ENCODE measurements at regions of chr7 and their contacts with region 1.

Region 1: DNA sequence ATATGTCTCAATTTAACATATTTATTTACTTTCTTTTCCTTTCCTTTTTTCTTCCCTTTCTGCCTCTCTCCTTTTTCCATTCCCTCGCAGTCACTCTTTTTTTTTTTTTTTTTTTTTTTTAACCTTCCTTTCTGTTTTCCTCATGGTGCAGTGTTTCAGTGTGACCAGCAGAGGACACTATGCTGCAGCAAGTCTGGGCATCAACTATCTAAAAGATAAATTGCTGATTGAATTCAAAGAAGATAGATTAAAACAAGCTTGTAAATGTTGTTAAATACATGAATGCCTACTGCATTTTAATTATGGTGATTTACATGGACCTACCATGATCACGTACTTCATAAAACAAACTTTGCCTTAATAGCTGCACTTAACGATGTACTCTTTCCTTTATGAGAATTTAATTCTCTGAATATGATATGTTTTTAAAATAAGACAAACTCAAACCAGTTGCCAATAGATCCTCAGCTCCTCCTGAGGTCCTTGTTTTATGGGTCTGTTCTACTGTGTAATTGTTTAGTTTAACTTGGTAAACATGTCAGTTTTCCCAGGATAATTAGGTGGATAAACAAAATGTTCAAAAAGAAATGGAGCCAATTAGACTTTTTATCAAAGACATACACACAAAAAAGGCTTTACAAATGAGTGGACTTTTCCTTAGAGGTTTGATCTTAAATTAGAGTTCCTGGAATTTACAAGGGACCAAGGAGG is 101.0 kb upstream of the AGR3 start:
- DNase-seq: peak; percentile 64
- ATAC-seq: no peak
- H3K4me3 ChIP-seq: no peak overlapping the region
- H3K27ac ChIP-seq: peak overlapping the region; percentile 23
- H3K4me1 ChIP-seq: peaks cover 43% of the 10 kb centered on the region
- H3K27me3 ChIP-seq: no peaks in the 10 kb centered on the region
- CTCF ChIP-seq: peak; percentile 93

Region 2: GRCh38 chr7:16801111-16801542 is 181.7 kb before region 1 on chr7:
- CTCF ChIA-PET with region 1: no interaction called
- POLR2A ChIA-PET with region 1: no interaction called
- intact Hi-C with region 1: loop called (anchors 1 kb)
- DNase-seq: peak; percentile 94
- ATAC-seq: peak; percentile 50
- H3K4me3 ChIP-seq: no peak overlapping the region
- H3K27ac ChIP-seq: peak overlapping the region; percentile 35
- H3K4me1 ChIP-seq: peaks cover 55% of the 10 kb centered on the region
- H3K27me3 ChIP-seq: no peaks in the 10 kb centered on the region
- CTCF ChIP-seq: peak; percentile 78

Region 3: GRCh38 chr7:16881844-16882243 is 101.0 kb before region 1 on chr7 and contains the start of gene AGR3:
- CTCF ChIA-PET with region 1: no interaction called
- POLR2A ChIA-PET with region 1: no interaction called
- intact Hi-C with region 1: no loop called
- DNase-seq: no peak
- ATAC-seq: no peak
- H3K4me3 ChIP-seq: no peak within 1 kb of the TSS
- H3K27ac ChIP-seq: no peak within 1 kb of the TSS
- H3K4me1 ChIP-seq: no peaks in the 10 kb centered on the region
- H3K27me3 ChIP-seq: no peaks in the 10 kb centered on the region
- CTCF ChIP-seq: no peak
- total RNA-seq, gene AGR3: not detected in 2 replicates

Region 4: DNA sequence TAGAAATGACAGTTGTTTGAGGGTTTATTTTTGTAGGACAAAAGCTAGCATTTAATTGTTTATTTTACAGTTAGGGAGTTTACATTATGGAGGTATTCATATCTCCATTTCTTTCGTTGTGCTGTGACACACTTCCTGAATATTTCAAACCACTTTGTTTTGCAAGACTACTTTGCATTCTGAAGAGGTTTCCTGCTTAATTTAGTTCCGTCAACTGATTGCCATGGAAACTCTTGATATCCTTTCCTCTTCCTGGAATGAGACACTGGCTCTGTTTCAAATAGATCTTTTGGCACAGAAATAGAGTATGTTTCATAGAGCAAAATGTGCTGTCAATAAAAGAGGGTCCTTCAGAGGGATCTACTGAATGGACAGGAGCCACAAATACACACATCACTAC is 58.5 kb after region 1 on chr7:
- CTCF ChIA-PET with region 1: no interaction called
- POLR2A ChIA-PET with region 1: interaction called, 4 read pairs
- intact Hi-C with region 1: loop called (anchors 2 kb)
- DNase-seq: peak; percentile 87
- ATAC-seq: peak; percentile 71
- H3K4me3 ChIP-seq: peak overlapping the region; percentile 9; the same call in 1 of the 2 replicates
- H3K27ac ChIP-seq: peak overlapping the region; percentile 80
- H3K4me1 ChIP-seq: peaks cover 53% of the 10 kb centered on the region
- H3K27me3 ChIP-seq: no peaks in the 10 kb centered on the region
- CTCF ChIP-seq: no peak

Region 5: DNA sequence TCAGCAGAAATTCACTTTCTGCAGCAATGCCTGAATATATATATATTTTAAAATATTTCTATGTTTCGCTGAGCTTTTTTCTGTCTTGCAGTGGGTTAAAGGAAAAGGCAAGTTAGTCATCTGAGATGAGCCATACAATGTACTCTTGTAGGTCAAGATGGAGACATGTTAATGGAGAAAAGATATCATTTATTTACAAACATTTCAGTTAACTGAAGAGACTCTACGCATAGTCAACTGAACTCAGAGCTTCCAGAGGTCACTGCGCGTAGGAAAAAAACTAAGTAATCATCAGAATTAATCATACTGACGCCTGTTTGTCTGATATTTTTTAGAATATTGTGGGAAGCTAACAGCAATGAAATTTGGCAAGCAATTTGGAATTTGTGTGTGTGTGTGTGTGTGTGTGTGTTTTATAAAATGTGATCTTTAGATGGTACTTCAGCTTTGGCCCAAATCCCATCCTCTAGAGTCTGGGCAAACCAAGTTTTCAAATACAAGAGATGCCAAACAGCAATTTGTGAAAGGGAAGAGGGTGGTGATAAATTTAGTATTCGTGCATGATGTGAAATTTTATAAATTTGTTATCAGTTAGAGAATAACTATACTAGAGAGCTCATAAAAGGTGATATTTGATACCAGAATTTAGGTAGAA is 92.9 kb after region 1 on chr7:
- CTCF ChIA-PET with region 1: no interaction called
- POLR2A ChIA-PET with region 1: no interaction called
- intact Hi-C with region 1: no loop called
- DNase-seq: no peak
- ATAC-seq: no peak
- H3K4me3 ChIP-seq: no peak overlapping the region
- H3K27ac ChIP-seq: no peak overlapping the region
- H3K4me1 ChIP-seq: no peaks in the 10 kb centered on the region
- H3K27me3 ChIP-seq: no peaks in the 10 kb centered on the region
- CTCF ChIP-seq: no peak

Region 6: GRCh38 chr7:17139081-17139480 is 156.3 kb after region 1 on chr7:
- CTCF ChIA-PET with region 1: no interaction called
- POLR2A ChIA-PET with region 1: no interaction called
- intact Hi-C with region 1: loop called (anchors 2 kb)
- DNase-seq: peak; percentile 56
- ATAC-seq: peak; percentile 20
- H3K4me3 ChIP-seq: peak overlapping the region; percentile 7; the same call in 1 of the 2 replicates
- H3K27ac ChIP-seq: peak overlapping the region; percentile 95
- H3K4me1 ChIP-seq: peaks cover 56% of the 10 kb centered on the region
- H3K27me3 ChIP-seq: no peaks in the 10 kb centered on the region
- CTCF ChIP-seq: no peak

Region 7: DNA sequence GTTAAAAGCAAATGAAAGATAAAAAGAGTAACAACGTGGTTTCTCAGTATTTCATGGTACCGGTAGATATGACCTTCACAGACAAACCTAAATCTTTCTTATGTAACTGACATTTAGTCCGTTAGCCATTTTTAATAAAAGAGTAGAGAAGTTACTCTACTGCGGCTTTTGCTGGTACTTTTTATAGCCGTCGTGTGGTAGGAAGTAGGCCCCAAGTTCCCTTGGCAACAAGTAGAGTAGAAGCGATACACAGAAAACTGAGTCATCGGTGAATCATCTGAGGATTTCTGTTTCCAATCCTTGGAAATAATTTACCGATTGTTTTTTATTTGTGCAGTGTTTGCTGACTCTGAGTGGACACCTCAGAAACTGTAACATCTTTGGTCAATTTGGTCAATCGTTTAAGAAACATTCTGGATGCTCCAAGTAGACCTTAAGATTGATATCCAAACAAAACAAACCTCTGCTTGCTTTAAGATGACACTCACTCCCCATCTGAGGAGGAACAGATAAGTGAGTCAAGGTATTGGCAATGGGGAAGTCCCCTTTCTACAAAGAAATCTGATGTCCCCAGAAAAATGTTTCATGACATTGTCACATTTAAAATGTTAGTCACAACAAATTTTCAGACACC is 251.7 kb after region 1 on chr7:
- CTCF ChIA-PET with region 1: no interaction called
- POLR2A ChIA-PET with region 1: no interaction called
- intact Hi-C with region 1: loop called (anchors 1 kb)
- DNase-seq: peak; percentile 98
- ATAC-seq: peak; percentile 91
- H3K4me3 ChIP-seq: peak overlapping the region; percentile 52
- H3K27ac ChIP-seq: peak overlapping the region; percentile 93
- H3K4me1 ChIP-seq: peaks cover 32% of the 10 kb centered on the region
- H3K27me3 ChIP-seq: no peaks in the 10 kb centered on the region
- CTCF ChIP-seq: 0 out of 2 replicates have a peak, but pooled peaks have one; percentile 9

Region 8: GRCh38 chr7:17434841-17435692 is 452.3 kb after region 1 on chr7:
- CTCF ChIA-PET with region 1: no interaction called
- POLR2A ChIA-PET with region 1: no interaction called
- intact Hi-C with region 1: loop called (anchors 5 kb)
- DNase-seq: peak; percentile 5
- ATAC-seq: peak; percentile 58
- H3K4me3 ChIP-seq: no peak overlapping the region
- H3K27ac ChIP-seq: no peak overlapping the region
- H3K4me1 ChIP-seq: peaks cover 9% of the 10 kb centered on the region; the same call in 1 of the 2 replicates
- H3K27me3 ChIP-seq: no peaks in the 10 kb centered on the region
- CTCF ChIP-seq: no peak

Region 9: DNA sequence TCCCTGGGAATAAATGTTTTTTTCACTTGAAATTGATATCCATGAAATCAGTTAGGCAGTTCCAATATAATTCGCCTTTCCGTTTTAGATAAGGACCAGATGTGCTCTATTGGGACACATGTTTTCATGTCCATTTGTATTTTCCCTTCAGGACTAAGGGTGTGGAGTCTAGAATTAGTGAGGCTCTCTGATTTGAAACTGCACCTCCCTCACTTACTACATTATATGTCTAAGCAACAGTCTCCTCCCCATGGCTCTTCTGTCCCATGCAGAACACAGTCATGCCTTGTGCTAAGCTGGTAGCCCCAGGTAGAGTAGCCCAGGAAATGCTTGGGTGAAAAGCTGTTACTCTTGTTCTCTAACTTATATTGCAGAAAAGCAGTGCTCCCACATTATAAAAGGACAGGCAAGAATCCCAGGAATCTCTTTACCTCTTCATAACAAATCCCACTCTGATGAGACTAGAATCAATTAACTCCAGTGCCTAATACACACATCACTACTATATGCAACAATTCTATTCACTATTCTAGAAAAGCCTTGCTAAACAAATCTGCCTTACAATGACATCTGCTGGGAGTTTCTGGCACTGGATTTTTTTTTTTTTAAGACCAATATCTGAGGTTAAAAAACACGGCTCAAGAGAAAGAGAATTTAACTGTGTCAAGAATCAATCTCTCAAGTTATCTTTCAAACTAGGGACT is 663.6 kb after region 1 on chr7:
- CTCF ChIA-PET with region 1: no interaction called
- POLR2A ChIA-PET with region 1: no interaction called
- intact Hi-C with region 1: loop called (anchors 1 kb)
- DNase-seq: peak; percentile 54
- ATAC-seq: peak; percentile 87
- H3K4me3 ChIP-seq: no peak overlapping the region
- H3K27ac ChIP-seq: no peak overlapping the region
- H3K4me1 ChIP-seq: peaks cover 8% of the 10 kb centered on the region
- H3K27me3 ChIP-seq: no peaks in the 10 kb centered on the region
- CTCF ChIP-seq: peak; percentile 77